HAP-1 (cell line): ENCODE measurements at regions of chr18 and their contacts with region 1.

Region 1: DNA sequence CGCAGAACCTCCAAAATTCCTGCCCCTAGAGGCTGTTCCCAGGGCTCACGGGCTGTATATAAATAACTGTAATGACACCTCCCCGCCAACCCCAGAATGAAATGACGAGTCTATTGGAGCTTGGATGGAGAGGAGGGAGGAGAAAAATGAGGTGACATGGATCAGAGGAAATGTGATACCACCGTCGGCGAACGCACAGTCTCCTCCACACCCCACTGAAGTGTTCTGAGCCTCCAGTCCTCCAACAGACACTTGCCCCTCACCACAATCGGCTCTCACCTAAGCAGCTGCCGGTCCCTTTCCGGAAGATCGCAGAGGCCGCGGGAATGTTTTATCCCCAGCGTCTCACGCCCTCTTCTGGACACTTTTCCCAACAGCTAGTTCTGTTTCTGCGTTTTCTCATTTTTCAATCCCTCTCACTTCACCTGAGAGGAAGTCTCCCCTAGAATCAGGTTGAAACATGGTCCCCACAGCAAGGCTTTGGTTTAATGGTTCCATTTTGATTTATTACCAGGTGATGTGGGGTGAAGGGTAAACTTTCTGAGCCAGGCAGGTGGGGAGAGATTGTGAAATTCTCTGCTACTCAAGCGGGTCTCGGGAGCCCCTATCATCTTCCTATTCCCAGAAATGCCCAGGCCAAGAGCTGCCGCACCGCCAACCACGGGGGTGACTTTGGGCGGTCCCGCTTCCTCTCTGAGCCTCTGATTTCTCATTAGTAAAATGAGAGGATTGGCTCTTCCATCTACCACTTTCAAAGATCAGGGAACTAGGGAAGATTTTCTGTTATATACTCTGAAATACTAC is 9.1 kb upstream of the MYO5B start:
- DNase-seq: peak; percentile 73 to 83
- H3K4me3 ChIP-seq: no peak overlapping the region
- H3K4me1 ChIP-seq: no peaks in the 10 kb centered on the region
- H3K27me3 ChIP-seq: no peaks in the 10 kb centered on the region

Region 2: DNA sequence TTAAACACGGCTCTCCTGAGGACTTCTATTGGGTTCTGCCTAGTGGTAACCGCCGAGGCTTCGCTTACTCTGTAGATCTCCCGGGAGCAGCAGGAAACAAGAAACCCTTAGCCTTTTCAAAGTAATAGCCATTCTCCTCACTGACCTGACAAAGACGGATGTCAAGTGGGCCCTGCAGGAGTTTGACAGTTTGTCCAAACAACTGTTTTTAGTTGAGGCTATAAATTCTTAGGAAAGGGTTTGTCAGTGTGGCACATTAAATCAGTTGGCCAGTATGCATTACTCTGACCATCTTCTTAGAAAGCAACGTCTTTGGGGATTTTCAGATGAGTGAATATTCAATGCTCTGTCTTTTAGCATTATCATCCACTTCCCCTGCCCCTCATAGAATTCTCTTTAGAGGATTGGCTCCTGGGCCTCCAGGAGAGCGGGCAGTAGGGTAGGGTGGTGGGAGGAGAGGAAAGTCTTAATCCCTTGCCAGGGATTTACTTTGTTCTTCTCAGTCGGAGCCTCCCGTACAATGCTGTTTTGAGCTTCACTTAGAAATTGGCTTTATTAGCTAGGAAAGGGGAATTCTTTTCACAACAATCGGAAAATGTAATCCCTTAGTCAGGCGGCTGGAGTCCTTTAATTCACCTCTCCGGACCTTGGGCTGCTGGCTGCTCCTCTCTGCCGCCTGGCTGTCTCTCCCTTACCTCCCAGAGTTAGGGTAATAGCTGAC is 703.6 kb before region 1 on chr18:
- in situ Hi-C with region 1: loop called (anchors 10 kb)
- DNase-seq: peak; percentile 86 to 96
- H3K4me3 ChIP-seq: no peak overlapping the region
- H3K4me1 ChIP-seq: peaks cover 18% of the 10 kb centered on the region
- H3K27me3 ChIP-seq: no peaks in the 10 kb centered on the region

Region 3: DNA sequence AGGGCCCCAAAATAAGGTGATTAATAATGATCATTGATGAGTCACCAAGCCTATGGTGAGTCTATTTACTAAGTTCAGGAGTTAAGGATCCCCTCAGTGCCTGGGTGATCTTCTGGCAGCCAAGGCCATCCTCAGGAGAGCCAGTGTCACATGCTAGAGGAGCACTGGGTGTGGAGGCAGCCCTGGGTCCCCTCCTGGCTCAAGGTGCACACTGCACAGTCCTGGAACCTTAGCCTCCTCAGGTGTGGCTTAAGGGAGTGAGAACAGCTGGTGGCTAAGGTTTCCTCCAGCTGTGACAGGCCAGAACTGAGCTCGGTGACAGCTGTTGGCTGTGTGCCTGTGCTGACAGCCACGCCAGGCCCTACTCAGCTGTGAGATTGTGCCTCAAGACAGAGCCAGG is 338.6 kb before region 1 on chr18:
- in situ Hi-C with region 1: no loop called
- DNase-seq: no peak
- H3K4me3 ChIP-seq: no peak overlapping the region
- H3K4me1 ChIP-seq: no peaks in the 10 kb centered on the region
- H3K27me3 ChIP-seq: no peaks in the 10 kb centered on the region

Region 4: GRCh38 chr18:49878567-49879270 is 325.3 kb before region 1 on chr18:
- in situ Hi-C with region 1: no loop called
- DNase-seq: no peak
- H3K4me3 ChIP-seq: no peak overlapping the region
- H3K4me1 ChIP-seq: no peaks in the 10 kb centered on the region
- H3K27me3 ChIP-seq: no peaks in the 10 kb centered on the region

Region 5: DNA sequence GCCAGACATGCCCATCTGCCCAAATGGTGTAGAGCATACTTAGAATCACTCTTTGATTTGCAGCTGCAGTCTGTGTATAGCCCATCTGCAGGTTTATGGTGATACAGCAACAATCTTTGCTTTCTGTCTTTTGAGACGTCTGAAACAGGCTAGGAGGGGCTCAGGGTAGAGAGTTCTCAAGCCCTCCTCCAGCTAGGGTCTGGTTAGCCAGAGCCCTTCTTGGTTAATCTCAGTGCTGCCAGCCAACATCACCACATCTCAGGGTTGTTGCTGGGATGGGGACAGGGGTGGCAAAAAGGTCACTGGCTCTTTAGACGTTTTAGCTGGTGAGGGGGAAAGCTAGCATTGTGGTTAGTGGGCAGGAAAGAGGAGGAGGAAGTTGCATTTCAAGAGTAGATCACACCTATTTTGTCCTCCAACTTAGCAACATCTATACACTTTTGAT is 254.0 kb before region 1 on chr18:
- in situ Hi-C with region 1: no loop called
- DNase-seq: no peak
- H3K4me3 ChIP-seq: no peak overlapping the region
- H3K4me1 ChIP-seq: no peaks in the 10 kb centered on the region
- H3K27me3 ChIP-seq: no peaks in the 10 kb centered on the region